Activated T-helper 2 cell treated with anti-CD3 and anti-CD28 coated beads, Interferon-gamma antibody, Interleukin-2, Interleukin-4, amounts not matched to agents 10 μg/mL and 5 μg/mL and 100 μg/mL, durations not matched to agents 14 hours and 24 hours and 36 hours (primary cell): ENCODE measurements at regions of chr6 and their contacts with region 1.

Region 1: DNA sequence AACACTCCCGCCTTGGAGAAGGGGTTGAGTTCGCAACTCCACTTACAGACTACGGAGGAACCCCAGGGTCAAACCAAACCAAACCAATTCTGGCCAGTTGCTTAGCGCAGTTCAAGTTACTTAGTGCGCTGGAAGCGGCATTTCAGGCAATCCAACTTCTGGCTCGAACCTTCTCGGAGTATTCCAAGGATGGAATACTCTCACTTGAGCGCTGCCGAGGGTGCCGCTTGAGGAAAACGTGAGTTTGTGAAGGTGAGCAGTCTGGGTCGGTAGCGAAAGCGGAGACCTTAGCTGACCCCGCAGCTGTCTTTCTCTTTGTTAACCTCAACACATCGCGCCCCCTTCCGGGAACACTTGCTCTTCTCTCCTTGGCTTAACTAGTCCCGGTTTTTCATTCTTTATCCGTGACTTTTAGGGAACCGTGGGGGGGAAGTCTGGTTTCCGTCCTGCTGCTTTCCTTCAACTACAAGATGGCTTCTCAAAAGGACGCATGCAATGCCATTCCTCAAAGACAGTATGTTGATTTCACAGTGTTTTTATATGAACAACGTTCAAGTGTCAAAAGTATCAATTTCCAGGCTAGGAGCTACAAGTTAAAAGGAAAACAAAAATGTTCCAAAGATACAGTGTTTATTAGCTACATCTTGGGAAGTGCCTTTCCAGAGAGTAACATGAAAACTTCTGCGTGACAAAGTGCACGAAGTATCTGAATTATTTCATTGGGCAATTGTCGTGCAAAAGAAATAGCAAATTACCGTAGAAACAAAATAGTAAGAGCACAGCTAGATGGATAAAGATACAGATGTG is 742 bp upstream of the PNISR start:
- DNase-seq: no peak
- H3K4me3 Mint-ChIP-seq: peak overlapping the region; percentile 98
- H3K27ac Mint-ChIP-seq: peak overlapping the region; percentile 100
- H3K4me1 Mint-ChIP-seq: peaks cover 50% of the 10 kb centered on the region
- H3K27me3 Mint-ChIP-seq: no peaks in the 10 kb centered on the region

Region 2: GRCh38 chr6:98947351-98948292 is 478.2 kb before region 1 on chr6 and contains the start of gene FBXL4:
- intact Hi-C with region 1: loop called (anchors 5 kb)
- DNase-seq: peak; percentile 76
- H3K4me3 Mint-ChIP-seq: peak within 1 kb of the TSS; percentile 89
- H3K27ac Mint-ChIP-seq: peak within 1 kb of the TSS; percentile 93
- H3K4me1 Mint-ChIP-seq: peaks cover 28% of the 10 kb centered on the region
- H3K27me3 Mint-ChIP-seq: peaks cover 16% of the 10 kb centered on the region
- total RNA-seq, gene FBXL4: 12.6 and 13.9 TPM in 2 replicates

Region 3: DNA sequence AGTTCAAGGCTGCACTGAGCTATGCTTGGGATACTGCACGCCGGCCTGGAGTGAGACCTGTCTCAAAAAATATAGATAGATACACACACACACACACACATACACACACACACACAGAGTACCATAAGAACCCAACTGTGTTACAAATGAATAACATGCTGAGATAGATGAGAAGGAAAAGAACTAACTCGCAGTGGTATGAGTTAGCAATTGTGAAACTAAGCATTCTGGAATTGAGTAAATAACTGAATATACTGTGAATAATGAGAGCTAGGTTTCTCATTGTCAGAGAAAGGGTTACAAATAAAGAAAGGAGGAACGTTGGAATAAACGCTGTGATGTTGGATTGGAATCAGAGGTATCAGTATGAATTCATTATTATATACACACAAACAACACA is 61.8 kb before region 1 on chr6:
- intact Hi-C with region 1: loop called (anchors 2 kb)
- DNase-seq: no peak
- H3K4me3 Mint-ChIP-seq: no peak overlapping the region
- H3K27ac Mint-ChIP-seq: peak overlapping the region; percentile 34
- H3K4me1 Mint-ChIP-seq: peaks cover 16% of the 10 kb centered on the region
- H3K27me3 Mint-ChIP-seq: no peaks in the 10 kb centered on the region

Region 4: DNA sequence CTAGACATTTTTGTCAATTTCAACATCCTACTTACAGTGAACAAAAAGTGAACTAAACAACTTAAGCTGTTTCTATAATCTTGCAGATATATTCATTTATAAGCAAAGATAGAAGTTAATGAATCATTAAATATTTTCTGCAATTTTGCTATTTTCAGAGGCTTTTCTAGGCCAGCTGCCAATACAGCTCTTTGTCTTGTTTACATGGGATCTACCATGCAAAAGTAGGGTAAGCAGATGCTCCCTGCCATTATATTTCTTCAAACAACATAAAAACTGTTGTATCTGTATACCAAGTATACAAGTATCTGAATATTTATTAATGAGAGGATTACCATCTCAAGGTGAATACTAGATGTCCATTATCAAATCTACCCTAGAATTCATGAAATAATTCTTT is 16.2 kb before region 1 on chr6:
- intact Hi-C with region 1: loop called (anchors 2 kb)
- DNase-seq: no peak
- H3K4me3 Mint-ChIP-seq: no peak overlapping the region
- H3K27ac Mint-ChIP-seq: no peak overlapping the region
- H3K4me1 Mint-ChIP-seq: peaks cover 7% of the 10 kb centered on the region
- H3K27me3 Mint-ChIP-seq: no peaks in the 10 kb centered on the region

Region 5: GRCh38 chr6:99568103-99568933 is 142.5 kb after region 1 on chr6 and contains the start of gene CCNC:
- intact Hi-C with region 1: loop called (anchors 1 kb)
- DNase-seq: peak; percentile 88
- H3K4me3 Mint-ChIP-seq: peak within 1 kb of the TSS; percentile 98
- H3K27ac Mint-ChIP-seq: peak within 1 kb of the TSS; percentile 93
- H3K4me1 Mint-ChIP-seq: peaks cover 17% of the 10 kb centered on the region
- H3K27me3 Mint-ChIP-seq: peaks cover 2% of the 10 kb centered on the region
- total RNA-seq, gene CCNC: 49.2 and 52.1 TPM in 2 replicates